Caco-2 (cell line): ENCODE measurements at regions of chr22 and their contacts with region 1.

Region 1: DNA sequence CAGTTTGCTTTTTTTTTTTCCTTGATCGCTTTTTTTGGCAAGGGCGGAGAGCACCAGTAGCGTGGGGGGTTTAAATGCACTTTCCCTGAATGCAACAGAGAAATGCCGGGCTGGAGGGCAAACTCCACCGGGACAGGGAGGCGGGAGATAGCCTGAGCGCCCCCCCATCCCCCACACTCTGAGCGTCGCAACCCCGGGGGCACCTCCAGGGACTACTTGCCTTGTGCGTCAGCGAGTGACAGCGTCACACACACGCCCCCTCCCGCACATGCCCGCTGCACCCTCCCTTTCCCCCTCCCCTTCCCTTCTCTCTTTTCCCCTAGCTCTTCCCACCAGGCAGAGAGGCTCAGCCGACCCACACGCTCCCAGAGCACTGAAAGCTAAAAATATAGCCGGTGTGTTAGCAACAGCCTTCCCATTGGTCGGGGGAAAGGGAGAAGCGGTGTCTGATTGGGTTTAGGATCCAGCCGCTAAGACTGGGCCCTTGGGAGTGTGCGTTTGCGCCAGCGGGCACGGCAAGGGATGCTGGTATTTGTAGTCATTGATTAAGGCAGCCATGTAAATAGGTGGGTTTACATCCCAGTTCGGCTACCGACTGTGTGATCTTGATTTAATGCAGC is 1.7 kb upstream of the TOB2 start:
- DNase-seq: peak; percentile 96 to 98
- H3K4me3 ChIP-seq: peak overlapping the region; percentile 93
- H3K4me3 Mint-ChIP-seq: peak overlapping the region; percentile 99
- H3K27ac Mint-ChIP-seq: peak overlapping the region; percentile 98
- H3K4me1 ChIP-seq: no peaks in the 10 kb centered on the region; the same call in 1 of the 2 replicates
- H3K4me1 Mint-ChIP-seq: peaks cover 13% of the 10 kb centered on the region
- H3K27me3 ChIP-seq: no peaks in the 10 kb centered on the region
- H3K27me3 Mint-ChIP-seq: no peaks in the 10 kb centered on the region
- CTCF ChIP-seq: no peak

Region 2: GRCh38 chr22:41285820-41286638 is 162.3 kb before region 1 on chr22 and contains the start of gene RANGAP1:
- CTCF ChIA-PET with region 1: no interaction called
- POLR2A ChIA-PET with region 1: interaction called, 10 read pairs
- intact Hi-C with region 1: loop called (anchors 1 kb)
- DNase-seq: peak; percentile 98 to 99
- H3K4me3 ChIP-seq: peak within 1 kb of the TSS; percentile 78
- H3K4me3 Mint-ChIP-seq: peak within 1 kb of the TSS; percentile 88
- H3K27ac Mint-ChIP-seq: peak within 1 kb of the TSS; percentile 92
- H3K4me1 ChIP-seq: peaks cover 39% of the 10 kb centered on the region
- H3K4me1 Mint-ChIP-seq: peaks cover 32% of the 10 kb centered on the region
- H3K27me3 ChIP-seq: no peaks in the 10 kb centered on the region
- H3K27me3 Mint-ChIP-seq: no peaks in the 10 kb centered on the region
- CTCF ChIP-seq: peak in 1 of 2 experiments; percentile 23
- total RNA-seq, gene RANGAP1: 106 and 112 TPM in 2 replicates

Region 3: DNA sequence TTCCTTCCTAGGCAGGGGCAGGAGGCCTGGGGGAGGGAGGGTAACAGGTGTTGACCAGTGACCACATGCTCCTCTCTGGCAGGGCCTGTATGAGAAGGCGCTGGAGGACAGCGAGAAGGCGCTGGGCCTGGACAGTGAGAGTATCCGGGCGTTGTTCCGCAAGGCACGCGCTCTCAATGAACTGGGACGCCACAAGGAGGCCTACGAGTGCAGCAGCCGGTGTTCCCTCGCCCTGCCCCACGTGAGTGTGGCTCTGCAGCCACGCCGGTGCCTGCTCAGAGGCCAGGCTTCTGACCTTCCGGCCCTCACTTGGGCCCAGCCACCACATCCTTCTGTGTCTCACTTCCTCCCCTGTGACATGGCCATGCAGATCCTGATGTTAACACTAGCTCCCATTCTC is 121.2 kb before region 1 on chr22:
- CTCF ChIA-PET with region 1: no interaction called
- POLR2A ChIA-PET with region 1: no interaction called
- intact Hi-C with region 1: no loop called
- DNase-seq: no peak
- H3K4me3 ChIP-seq: no peak overlapping the region
- H3K4me3 Mint-ChIP-seq: no peak overlapping the region
- H3K27ac Mint-ChIP-seq: no peak overlapping the region
- H3K4me1 ChIP-seq: no peaks in the 10 kb centered on the region
- H3K4me1 Mint-ChIP-seq: peaks cover 6% of the 10 kb centered on the region
- H3K27me3 ChIP-seq: no peaks in the 10 kb centered on the region
- H3K27me3 Mint-ChIP-seq: no peaks in the 10 kb centered on the region
- CTCF ChIP-seq: no peak

Region 4: DNA sequence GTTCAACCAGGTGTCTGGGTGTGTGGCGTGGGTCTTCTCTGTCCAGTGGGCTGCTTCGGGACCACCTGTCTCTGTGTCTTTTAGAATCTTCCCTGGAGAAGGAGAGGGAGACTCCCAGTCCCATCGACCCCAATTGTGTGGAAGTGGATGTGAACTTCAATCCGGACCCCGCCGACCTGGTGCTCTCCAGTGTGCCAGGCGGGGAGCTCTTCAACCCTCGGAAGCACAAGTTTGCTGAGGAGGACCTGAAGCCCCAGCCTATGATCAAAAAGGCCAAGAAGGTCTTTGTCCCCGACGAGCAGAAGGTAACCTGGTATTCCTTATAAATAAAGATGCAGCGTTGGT is 54.3 kb before region 1 on chr22:
- CTCF ChIA-PET with region 1: no interaction called
- POLR2A ChIA-PET with region 1: no interaction called
- intact Hi-C with region 1: no loop called
- DNase-seq: no peak
- H3K4me3 ChIP-seq: no peak overlapping the region
- H3K4me3 Mint-ChIP-seq: no peak overlapping the region
- H3K27ac Mint-ChIP-seq: no peak overlapping the region
- H3K4me1 ChIP-seq: no peaks in the 10 kb centered on the region
- H3K4me1 Mint-ChIP-seq: no peaks in the 10 kb centered on the region
- H3K27me3 ChIP-seq: no peaks in the 10 kb centered on the region
- H3K27me3 Mint-ChIP-seq: no peaks in the 10 kb centered on the region
- CTCF ChIP-seq: no peak

Region 5: GRCh38 chr22:41468381-41469217 is 20.3 kb after region 1 on chr22 and contains the starts of genes ACO2 and PHF5A:
- CTCF ChIA-PET with region 1: interaction called, 8 read pairs
- POLR2A ChIA-PET with region 1: interaction called, 122 read pairs
- intact Hi-C with region 1: loop called (anchors 1 kb)
- DNase-seq: peak; percentile 97
- H3K4me3 ChIP-seq: peak within 1 kb of the TSS; percentile 96
- H3K4me3 Mint-ChIP-seq: peak within 1 kb of the TSS; percentile 92
- H3K27ac Mint-ChIP-seq: peak within 1 kb of the TSS; percentile 100
- H3K4me1 ChIP-seq: peaks cover 18% of the 10 kb centered on the region
- H3K4me1 Mint-ChIP-seq: peaks cover under 1% of the 10 kb centered on the region
- H3K27me3 ChIP-seq: no peaks in the 10 kb centered on the region
- H3K27me3 Mint-ChIP-seq: no peaks in the 10 kb centered on the region
- CTCF ChIP-seq: no peak
- total RNA-seq, gene ACO2: 90.5 and 95.5 TPM in 2 replicates
- total RNA-seq, gene PHF5A: 75.4 and 78.6 TPM in 2 replicates

Region 6: GRCh38 chr22:41550952-41551491 is 102.7 kb after region 1 on chr22:
- CTCF ChIA-PET with region 1: no interaction called
- POLR2A ChIA-PET with region 1: interaction called, 11 read pairs
- intact Hi-C with region 1: no loop called
- DNase-seq: no peak
- H3K4me3 ChIP-seq: no peak overlapping the region
- H3K4me3 Mint-ChIP-seq: no peak overlapping the region
- H3K27ac Mint-ChIP-seq: no peak overlapping the region
- H3K4me1 ChIP-seq: peaks cover 15% of the 10 kb centered on the region
- H3K4me1 Mint-ChIP-seq: peaks cover 15% of the 10 kb centered on the region
- H3K27me3 ChIP-seq: no peaks in the 10 kb centered on the region
- H3K27me3 Mint-ChIP-seq: no peaks in the 10 kb centered on the region
- CTCF ChIP-seq: no peak